ENCODE measurements at regions of chr17 and their contacts with region 1.

Region 1: DNA sequence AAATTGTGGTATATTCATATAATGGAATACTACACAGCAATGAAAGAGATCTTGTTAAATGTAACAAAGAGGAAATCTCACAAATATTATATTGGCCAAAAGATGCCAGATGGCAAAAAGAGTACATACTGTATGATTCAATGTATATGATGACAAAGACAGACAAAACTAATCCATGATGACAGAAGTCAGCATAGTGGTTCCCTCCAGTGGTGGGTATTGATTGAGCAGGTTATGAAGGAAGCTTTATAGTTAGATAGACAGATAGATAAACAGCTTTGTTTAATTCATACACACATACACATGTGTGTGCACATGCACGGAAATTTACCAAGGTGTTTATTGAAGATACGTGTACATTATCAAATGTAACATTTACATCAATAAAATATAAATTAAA is 74.4 kb upstream of the SMIM36 start:
- DNase-seq: peak; percentile 50
- ATAC-seq: peak; percentile 58
- H3K4me3 ChIP-seq: no peak overlapping the region
- H3K27ac ChIP-seq: no peak overlapping the region
- H3K4me1 ChIP-seq: peaks cover 19% of the 10 kb centered on the region
- H3K27me3 ChIP-seq: no peaks in the 10 kb centered on the region
- CTCF ChIP-seq: peak; percentile 66

Region 2: GRCh38 chr17:55549140-55549539 is 36.5 kb before region 1 on chr17:
- CTCF ChIA-PET with region 1: interaction called, 4 read pairs
- POLR2A ChIA-PET with region 1: no interaction called
- intact Hi-C with region 1: loop called (anchors 1 kb)
- DNase-seq: peak; percentile 68
- ATAC-seq: peak; percentile 82
- H3K4me3 ChIP-seq: no peak overlapping the region
- H3K27ac ChIP-seq: no peak overlapping the region
- H3K4me1 ChIP-seq: no peaks in the 10 kb centered on the region
- H3K27me3 ChIP-seq: peaks cover 56% of the 10 kb centered on the region
- CTCF ChIP-seq: peak; percentile 80

Region 3: GRCh38 chr17:55652114-55652823 is 66.6 kb after region 1 on chr17:
- CTCF ChIA-PET with region 1: no interaction called
- POLR2A ChIA-PET with region 1: no interaction called
- intact Hi-C with region 1: no loop called
- DNase-seq: no peak
- ATAC-seq: no peak
- H3K4me3 ChIP-seq: no peak overlapping the region
- H3K27ac ChIP-seq: no peak overlapping the region
- H3K4me1 ChIP-seq: no peaks in the 10 kb centered on the region
- H3K27me3 ChIP-seq: peaks cover 74% of the 10 kb centered on the region
- CTCF ChIP-seq: no peak